ENCODE measurements at regions of chr13 and their contacts with region 1.

Region 1: DNA sequence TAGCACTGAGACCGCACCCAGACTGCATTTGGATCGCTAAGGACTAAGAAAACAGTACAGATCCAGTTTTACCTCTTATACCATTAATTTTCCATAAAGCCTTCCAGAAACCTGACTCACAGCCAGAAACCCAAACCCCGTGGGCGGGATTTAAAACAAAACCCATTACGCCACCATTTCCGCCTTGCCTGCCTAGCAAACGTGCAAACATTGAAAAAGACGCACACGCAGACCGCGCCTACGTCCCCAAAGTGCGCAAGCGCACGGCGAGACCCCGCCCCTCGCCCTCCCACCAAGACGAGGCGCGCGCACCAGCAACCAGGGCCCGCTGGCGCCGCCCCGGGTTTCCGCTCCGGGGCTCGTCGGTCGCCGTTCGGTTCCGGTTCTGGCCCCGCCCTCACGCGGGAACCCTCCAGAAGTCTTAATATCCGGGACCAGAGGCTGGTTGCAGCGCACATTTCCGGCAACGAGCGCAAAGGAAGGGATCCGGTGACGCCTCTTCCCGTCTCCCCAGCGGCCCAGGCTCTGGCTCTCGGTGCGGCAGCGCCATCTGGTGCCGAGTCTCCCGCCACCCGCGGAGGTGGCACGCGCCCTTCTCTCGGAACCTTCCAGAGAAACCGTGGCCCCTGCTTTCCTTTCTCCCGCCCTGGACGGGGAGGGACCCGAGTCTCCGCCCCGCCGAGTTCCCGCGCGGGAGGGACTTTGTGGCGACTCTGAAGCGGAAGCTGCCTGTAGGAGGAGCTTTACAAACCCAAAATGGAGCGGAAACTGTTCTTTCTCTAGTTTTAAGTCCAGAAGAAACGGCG is 256.9 kb upstream of the STARD13 start:
- DNase-seq: peak; percentile 99
- H3K4me3 ChIP-seq: peak overlapping the region in 2 of 3 donors; percentile 31 to 35
- H3K27ac ChIP-seq: peak overlapping the region; percentile 96 to 98 (median 96)
- H3K4me1 ChIP-seq: peaks cover 13 to 18% of the 10 kb centered on the region in 2 donors
- H3K27me3 ChIP-seq: no peaks in the 10 kb centered on the region
- CTCF ChIP-seq: peak; percentile 64 to 99 (median 90)
- POLR2A ChIP-seq: peak in 1 of 2 donors; percentile 81

Region 2: GRCh38 chr13:32586080-32586900 is 956.2 kb before region 1 on chr13 and contains the start of gene PDS5B:
- intact Hi-C with region 1: loop called (anchors 5 kb)
- DNase-seq: peak; percentile 93 to 94
- H3K4me3 ChIP-seq: peak within 1 kb of the TSS; percentile 48 to 76 (median 72)
- H3K27ac ChIP-seq: peak within 1 kb of the TSS; percentile 79 to 96 (median 91)
- H3K4me1 ChIP-seq: peaks cover 3 to 5% of the 10 kb centered on the region in 2 donors
- H3K27me3 ChIP-seq: no peaks in the 10 kb centered on the region
- CTCF ChIP-seq: peak; percentile 44 to 99 (median 94)
- POLR2A ChIP-seq: peak in 1 of 2 donors; percentile 77
- total RNA-seq, gene PDS5B: 47.9 to 55.1 (median 49.3) TPM

Region 3: GRCh38 chr13:33723772-33724435 is 181.4 kb after region 1 on chr13:
- intact Hi-C with region 1: loop called (anchors 5 kb)
- DNase-seq: peak; percentile 76 to 80
- H3K4me3 ChIP-seq: no peak overlapping the region
- H3K27ac ChIP-seq: peak overlapping the region in 1 of 3 donors; percentile 54
- H3K4me1 ChIP-seq: peaks cover 5 to 7% of the 10 kb centered on the region in 2 donors
- H3K27me3 ChIP-seq: no peaks in the 10 kb centered on the region
- CTCF ChIP-seq: peak; percentile 36 to 80 (median 69)
- POLR2A ChIP-seq: no peak